Natural killer cell (primary cell): ENCODE measurements at regions of chr14 and their contacts with region 1.

Region 1: GRCh38 chr14:23814527-23815256 is 138.9 kb upstream of the DHRS4 start:
- DNase-seq: no peak
- ATAC-seq: no peak
- H3K4me3 ChIP-seq: no peak overlapping the region
- H3K4me3 Mint-ChIP-seq: no peak overlapping the region
- H3K27ac ChIP-seq: no peak overlapping the region
- H3K27ac Mint-ChIP-seq: no peak overlapping the region
- H3K4me1 ChIP-seq: no peaks in the 10 kb centered on the region
- H3K4me1 Mint-ChIP-seq: no peaks in the 10 kb centered on the region
- H3K27me3 ChIP-seq: no peaks in the 10 kb centered on the region
- H3K27me3 Mint-ChIP-seq: peaks cover 0 to 2% of the 10 kb centered on the region in 2 donors
- CTCF ChIP-seq: no peak

Region 2: GRCh38 chr14:23379366-23380196 is 435.1 kb before region 1 on chr14:
- intact Hi-C with region 1: no loop called
- DNase-seq: peak in 1 of 2 donors; percentile 84
- ATAC-seq: peak; percentile 66 to 87 (median 69)
- H3K4me3 ChIP-seq: no peak overlapping the region
- H3K4me3 Mint-ChIP-seq: no peak overlapping the region
- H3K27ac ChIP-seq: no peak overlapping the region
- H3K27ac Mint-ChIP-seq: no peak overlapping the region
- H3K4me1 ChIP-seq: no peaks in the 10 kb centered on the region
- H3K4me1 Mint-ChIP-seq: no peaks in the 10 kb centered on the region
- H3K27me3 ChIP-seq: no peaks in the 10 kb centered on the region
- H3K27me3 Mint-ChIP-seq: peaks cover 0 to 4% of the 10 kb centered on the region in 2 donors
- CTCF ChIP-seq: peak; percentile 66

Region 3: DNA sequence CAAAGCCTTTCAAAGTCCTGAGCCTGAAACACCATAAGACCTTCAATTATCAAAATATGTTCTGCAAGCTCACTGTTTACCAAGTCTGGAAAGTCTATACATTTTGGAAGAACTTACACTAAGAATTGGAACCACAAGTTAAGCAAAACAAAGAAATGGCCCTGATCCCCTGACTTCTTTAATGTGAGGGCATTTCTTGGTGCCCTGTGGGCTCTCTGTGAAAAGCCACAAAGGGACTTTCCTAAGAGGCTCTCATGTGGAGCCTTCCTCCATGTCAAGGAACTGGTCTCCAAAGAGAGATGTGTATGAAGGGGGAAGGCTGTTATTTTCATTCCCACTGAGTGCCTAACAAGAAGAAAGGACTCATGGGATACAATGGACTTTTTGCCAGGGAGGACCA is 393.1 kb before region 1 on chr14:
- intact Hi-C with region 1: no loop called
- DNase-seq: no peak
- ATAC-seq: no peak
- H3K4me3 ChIP-seq: no peak overlapping the region
- H3K4me3 Mint-ChIP-seq: no peak overlapping the region
- H3K27ac ChIP-seq: no peak overlapping the region
- H3K27ac Mint-ChIP-seq: no peak overlapping the region
- H3K4me1 ChIP-seq: no peaks in the 10 kb centered on the region
- H3K4me1 Mint-ChIP-seq: no peaks in the 10 kb centered on the region
- H3K27me3 ChIP-seq: no peaks in the 10 kb centered on the region
- H3K27me3 Mint-ChIP-seq: peaks cover 0 to 2% of the 10 kb centered on the region in 2 donors
- CTCF ChIP-seq: no peak

Region 4: GRCh38 chr14:23801766-23802165 is 12.9 kb before region 1 on chr14:
- intact Hi-C with region 1: loop called (anchors 1 kb)
- DNase-seq: no peak
- ATAC-seq: no peak
- H3K4me3 ChIP-seq: no peak overlapping the region
- H3K4me3 Mint-ChIP-seq: no peak overlapping the region
- H3K27ac ChIP-seq: no peak overlapping the region
- H3K27ac Mint-ChIP-seq: no peak overlapping the region
- H3K4me1 ChIP-seq: no peaks in the 10 kb centered on the region
- H3K4me1 Mint-ChIP-seq: no peaks in the 10 kb centered on the region
- H3K27me3 ChIP-seq: no peaks in the 10 kb centered on the region
- H3K27me3 Mint-ChIP-seq: peaks cover 20 to 30% of the 10 kb centered on the region in 2 donors
- CTCF ChIP-seq: no peak

Region 5: DNA sequence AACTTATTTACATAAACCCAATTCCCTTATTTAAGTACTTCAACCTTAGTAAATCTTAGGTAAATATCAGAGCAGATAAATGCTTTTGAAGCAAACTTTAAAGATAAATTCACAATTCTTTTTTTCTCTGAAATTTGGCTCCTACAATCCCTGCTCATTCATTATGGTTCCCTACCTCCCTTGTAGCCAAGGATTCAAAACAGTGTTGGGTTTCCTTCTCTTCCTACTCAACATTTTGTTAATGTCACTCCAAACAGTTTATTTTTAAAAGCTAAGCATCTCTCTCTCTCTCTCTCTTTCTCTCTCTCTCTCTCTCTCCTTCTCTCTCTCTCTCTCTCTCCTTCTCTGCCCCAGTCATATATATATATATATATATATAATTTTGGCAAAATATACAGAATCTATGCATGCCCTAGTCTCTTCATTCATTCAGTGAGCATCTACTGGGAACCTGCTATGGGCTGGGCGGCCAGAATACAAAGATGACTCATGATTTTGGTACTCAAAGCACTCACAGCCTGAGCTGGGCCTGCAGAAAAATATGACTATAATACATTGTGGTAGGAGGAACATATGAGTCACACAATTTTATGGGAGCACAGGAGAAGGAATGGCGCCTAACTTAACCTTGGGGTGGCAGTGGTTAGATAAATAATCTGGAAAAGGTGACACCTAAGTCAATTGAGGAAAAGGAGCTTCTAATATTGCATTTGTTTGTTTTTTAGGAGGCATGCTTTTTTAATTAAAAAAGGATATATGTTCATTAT is 15.2 kb after region 1 on chr14:
- intact Hi-C with region 1: no loop called
- DNase-seq: no peak
- ATAC-seq: no peak
- H3K4me3 ChIP-seq: no peak overlapping the region
- H3K4me3 Mint-ChIP-seq: no peak overlapping the region
- H3K27ac ChIP-seq: no peak overlapping the region
- H3K27ac Mint-ChIP-seq: no peak overlapping the region
- H3K4me1 ChIP-seq: peaks cover 11% of the 10 kb centered on the region
- H3K4me1 Mint-ChIP-seq: no peaks in the 10 kb centered on the region
- H3K27me3 ChIP-seq: no peaks in the 10 kb centered on the region
- H3K27me3 Mint-ChIP-seq: no peaks in the 10 kb centered on the region
- CTCF ChIP-seq: no peak

Region 6: GRCh38 chr14:23865502-23865901 is 50.8 kb after region 1 on chr14:
- intact Hi-C with region 1: no loop called
- DNase-seq: no peak
- ATAC-seq: no peak
- H3K4me3 ChIP-seq: no peak overlapping the region
- H3K4me3 Mint-ChIP-seq: no peak overlapping the region
- H3K27ac ChIP-seq: no peak overlapping the region
- H3K27ac Mint-ChIP-seq: no peak overlapping the region
- H3K4me1 ChIP-seq: no peaks in the 10 kb centered on the region
- H3K4me1 Mint-ChIP-seq: no peaks in the 10 kb centered on the region
- H3K27me3 ChIP-seq: no peaks in the 10 kb centered on the region
- H3K27me3 Mint-ChIP-seq: peaks cover 18 to 34% of the 10 kb centered on the region in 2 donors
- CTCF ChIP-seq: no peak